ENCODE measurements at regions of chrX and their contacts with region 1.

Region 1: DNA sequence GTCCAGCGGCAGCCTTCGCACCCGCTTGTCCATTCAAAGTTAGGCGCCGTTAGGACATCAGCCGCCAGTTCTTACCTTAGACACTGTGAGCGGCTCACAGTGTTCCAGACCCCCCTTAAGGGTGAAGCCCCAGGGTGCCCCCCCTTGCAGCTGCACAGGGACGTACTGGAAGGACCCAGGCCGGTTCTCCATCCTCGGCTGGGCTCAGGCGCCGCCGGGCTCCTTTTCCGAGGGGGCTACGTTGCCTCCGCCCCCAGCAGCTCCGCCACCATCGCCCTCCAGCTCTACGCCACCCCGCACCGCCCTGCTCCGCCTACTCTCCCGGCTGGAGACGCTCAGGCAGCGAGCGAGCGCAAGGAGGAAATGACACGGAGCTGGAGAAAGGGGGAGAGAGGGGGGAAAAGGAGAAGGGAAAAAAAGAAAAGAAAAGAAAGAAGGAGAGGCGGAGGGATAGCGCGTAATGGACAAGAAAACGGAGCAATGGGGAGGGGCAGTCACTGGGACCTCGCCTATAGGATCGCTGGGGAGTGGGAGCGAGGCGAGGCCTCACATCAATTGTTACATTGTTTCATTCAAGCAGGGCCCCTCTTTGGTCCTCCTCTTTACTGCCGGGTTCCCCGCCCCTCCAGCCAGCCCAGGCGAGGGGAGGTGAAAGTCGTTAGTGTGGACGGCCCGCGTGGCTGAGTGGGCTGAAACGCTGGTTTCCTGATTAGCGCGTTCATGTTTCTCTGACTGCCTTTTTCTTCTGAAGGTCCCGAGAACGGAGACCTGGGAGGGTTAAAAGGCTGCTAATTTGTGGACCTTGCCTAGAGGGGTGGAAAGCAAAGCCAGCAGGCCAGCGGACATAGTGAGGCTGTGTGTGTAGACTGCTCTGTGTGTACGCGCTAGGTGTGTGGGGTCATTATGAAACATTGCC is at the start of gene SHROOM4:
- DNase-seq: peak; percentile 90
- H3K4me3 ChIP-seq: peak within 1 kb of the TSS; percentile 51 to 63 (median 52)
- H3K27ac ChIP-seq: peak within 1 kb of the TSS; percentile 96
- H3K4me1 ChIP-seq: peaks cover 22% of the 10 kb centered on the region
- H3K27me3 ChIP-seq: no peaks in the 10 kb centered on the region
- CTCF ChIP-seq: no peak
- POLR2A ChIP-seq: no peak
- total RNA-seq, gene SHROOM4: 57.5 and 58.7 TPM in 2 replicates

Region 2: GRCh38 chrX:50769389-50770063 is 44.6 kb before region 1 on chrX:
- CTCF ChIA-PET with region 1: no interaction called
- POLR2A ChIA-PET with region 1: no interaction called
- dilution Hi-C with region 1: no loop called
- intact Hi-C with region 1: loop called (anchors 2 kb)
- DNase-seq: peak; percentile 25
- H3K4me3 ChIP-seq: no peak overlapping the region
- H3K27ac ChIP-seq: peak overlapping the region; percentile 84
- H3K4me1 ChIP-seq: peaks cover 38% of the 10 kb centered on the region
- H3K27me3 ChIP-seq: no peaks in the 10 kb centered on the region
- CTCF ChIP-seq: no peak
- POLR2A ChIP-seq: no peak

Region 3: DNA sequence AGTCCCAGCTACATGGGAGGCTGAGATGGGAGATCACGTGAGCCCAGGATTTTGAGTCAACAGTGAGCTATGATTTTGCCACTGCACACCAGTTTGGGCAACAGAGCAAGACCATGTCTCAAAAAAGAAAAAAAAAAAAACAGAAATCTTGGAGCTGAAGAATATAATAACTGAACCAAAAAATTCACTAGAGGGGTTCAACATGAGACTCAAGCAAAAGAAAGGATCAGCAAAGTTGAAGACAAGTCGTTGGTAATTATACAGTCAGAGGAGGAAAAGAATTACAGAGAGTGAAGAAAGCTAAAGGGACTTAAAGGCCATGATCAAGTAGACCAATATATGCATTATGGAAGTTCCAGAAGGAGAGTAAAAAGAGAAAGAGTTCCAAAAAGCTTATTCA is 27.0 kb before region 1 on chrX:
- CTCF ChIA-PET with region 1: no interaction called
- POLR2A ChIA-PET with region 1: no interaction called
- dilution Hi-C with region 1: no loop called
- intact Hi-C with region 1: no loop called
- DNase-seq: no peak
- H3K4me3 ChIP-seq: no peak overlapping the region
- H3K27ac ChIP-seq: no peak overlapping the region
- H3K4me1 ChIP-seq: no peaks in the 10 kb centered on the region
- H3K27me3 ChIP-seq: no peaks in the 10 kb centered on the region
- CTCF ChIP-seq: no peak
- POLR2A ChIP-seq: no peak

Region 4: DNA sequence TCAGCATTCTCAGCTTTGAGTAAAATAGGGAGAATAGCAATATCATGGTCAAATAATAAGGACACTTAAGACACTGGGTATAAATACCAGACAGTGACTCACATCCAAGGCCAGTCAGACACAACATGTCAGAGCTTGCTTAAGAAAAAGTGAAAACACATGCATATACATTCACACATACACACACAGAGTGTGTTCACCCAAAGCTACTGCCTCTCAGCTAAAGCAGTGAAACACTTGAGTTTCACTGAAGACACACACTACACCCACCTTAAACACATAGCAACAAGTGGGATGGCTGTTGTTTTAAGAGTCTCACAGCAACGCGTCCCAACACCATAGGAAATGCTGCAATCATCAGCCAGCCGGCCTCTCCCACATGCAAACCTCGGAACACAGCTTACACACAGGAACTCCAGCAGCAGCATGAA is 14.5 kb before region 1 on chrX:
- CTCF ChIA-PET with region 1: interaction called, 3 read pairs
- POLR2A ChIA-PET with region 1: interaction called, 5 read pairs
- dilution Hi-C with region 1: no loop called
- intact Hi-C with region 1: loop called (anchors 1 kb)
- DNase-seq: peak; percentile 79
- H3K4me3 ChIP-seq: no peak overlapping the region
- H3K27ac ChIP-seq: peak overlapping the region; percentile 88
- H3K4me1 ChIP-seq: peaks cover 17% of the 10 kb centered on the region
- H3K27me3 ChIP-seq: no peaks in the 10 kb centered on the region
- CTCF ChIP-seq: no peak
- POLR2A ChIP-seq: no peak

Region 5: GRCh38 chrX:50905334-50905733 is 91.2 kb after region 1 on chrX:
- CTCF ChIA-PET with region 1: interaction called, 14 read pairs
- POLR2A ChIA-PET with region 1: no interaction called
- dilution Hi-C with region 1: no loop called
- intact Hi-C with region 1: loop called (anchors 1 kb)
- DNase-seq: no peak
- H3K4me3 ChIP-seq: no peak overlapping the region
- H3K27ac ChIP-seq: no peak overlapping the region
- H3K4me1 ChIP-seq: no peaks in the 10 kb centered on the region
- H3K27me3 ChIP-seq: peaks cover 0 to 2% of the 10 kb centered on the region in 2 experiments
- CTCF ChIP-seq: peak in 1 of 2 donors; percentile 5
- POLR2A ChIP-seq: no peak